Dendritic cell treated with granulocyte-macrophage colony-stimulating factor and Interleukin-4, amounts not matched to agents 40 ng/mL and 50 ng/mL, for 4 days (primary cell): ENCODE measurements at regions of chr7 and their contacts with region 1.

Region 1: GRCh38 chr7:86089455-86089854 is 554.3 kb upstream of the GRM3 start:
- H3K4me3 Mint-ChIP-seq: no peak overlapping the region
- H3K27ac Mint-ChIP-seq: no peak overlapping the region
- H3K4me1 Mint-ChIP-seq: no peaks in the 10 kb centered on the region
- H3K27me3 Mint-ChIP-seq: no peaks in the 10 kb centered on the region

Region 2: DNA sequence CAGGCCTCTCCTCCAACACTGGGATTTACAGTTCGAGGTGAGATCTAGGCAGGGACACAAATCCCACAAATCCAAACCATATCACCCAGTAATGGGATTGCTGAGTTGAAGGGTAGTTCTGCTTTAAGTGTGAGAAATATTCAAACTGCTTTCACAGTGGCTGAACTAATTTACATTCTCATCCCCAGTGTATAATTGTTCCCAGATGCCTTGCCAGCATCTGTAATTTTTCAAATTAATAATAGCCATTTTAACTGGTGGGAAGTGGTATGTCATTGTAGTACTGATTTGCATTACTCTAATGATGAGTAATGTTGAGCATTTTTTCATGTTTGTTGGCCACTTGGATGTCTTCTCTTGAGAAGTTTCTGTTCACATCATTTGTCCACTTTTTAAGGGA is 38.5 kb before region 1 on chr7:
- intact Hi-C with region 1: no loop called
- H3K4me3 Mint-ChIP-seq: no peak overlapping the region
- H3K27ac Mint-ChIP-seq: no peak overlapping the region
- H3K4me1 Mint-ChIP-seq: no peaks in the 10 kb centered on the region
- H3K27me3 Mint-ChIP-seq: no peaks in the 10 kb centered on the region

Region 3: GRCh38 chr7:86149024-86149665 is 59.7 kb after region 1 on chr7:
- intact Hi-C with region 1: loop called (anchors 10 kb)
- H3K4me3 Mint-ChIP-seq: no peak overlapping the region
- H3K27ac Mint-ChIP-seq: no peak overlapping the region
- H3K4me1 Mint-ChIP-seq: no peaks in the 10 kb centered on the region
- H3K27me3 Mint-ChIP-seq: no peaks in the 10 kb centered on the region